PC-3 (cell line): ENCODE measurements at regions of chr3 and their contacts with region 1.

Region 1: GRCh38 chr3:49802719-49803464 is at the start of gene INKA1:
- DNase-seq: peak; percentile 89
- ATAC-seq: peak; percentile 79
- H3K4me3 ChIP-seq: peak within 1 kb of the TSS; percentile 76
- H3K27ac ChIP-seq: no peak within 1 kb of the TSS
- H3K4me1 ChIP-seq: peaks cover 23% of the 10 kb centered on the region
- H3K27me3 ChIP-seq: no peaks in the 10 kb centered on the region
- CTCF ChIP-seq: peak; percentile 87
- total RNA-seq, gene INKA1: 1.3 and 5.8 TPM in 2 replicates

Region 2: GRCh38 chr3:49703443-49703927 is 99.4 kb before region 1 on chr3:
- CTCF ChIA-PET with region 1: no interaction called
- POLR2A ChIA-PET with region 1: interaction called, 5 read pairs
- intact Hi-C with region 1: loop called (anchors 1 kb)
- DNase-seq: peak; percentile 81
- ATAC-seq: peak; percentile 88
- H3K4me3 ChIP-seq: no peak overlapping the region
- H3K27ac ChIP-seq: no peak overlapping the region
- H3K4me1 ChIP-seq: no peaks in the 10 kb centered on the region
- H3K27me3 ChIP-seq: no peaks in the 10 kb centered on the region
- CTCF ChIP-seq: peak; percentile 85

Region 3: GRCh38 chr3:49775538-49775937 is 27.4 kb before region 1 on chr3:
- CTCF ChIA-PET with region 1: interaction called, 3 read pairs
- POLR2A ChIA-PET with region 1: interaction called, 17 read pairs
- intact Hi-C with region 1: no loop called
- DNase-seq: no peak
- ATAC-seq: no peak
- H3K4me3 ChIP-seq: no peak overlapping the region
- H3K27ac ChIP-seq: no peak overlapping the region
- H3K4me1 ChIP-seq: peaks cover 23% of the 10 kb centered on the region
- H3K27me3 ChIP-seq: no peaks in the 10 kb centered on the region
- CTCF ChIP-seq: no peak

Region 4: GRCh38 chr3:49899815-49900214 is 96.9 kb after region 1 on chr3:
- CTCF ChIA-PET with region 1: interaction called, 6 read pairs
- POLR2A ChIA-PET with region 1: interaction called, 10 read pairs
- intact Hi-C with region 1: no loop called
- DNase-seq: peak; percentile 23
- ATAC-seq: no peak
- H3K4me3 ChIP-seq: peak overlapping the region; percentile 63
- H3K27ac ChIP-seq: peak overlapping the region; percentile 99
- H3K4me1 ChIP-seq: peaks cover 59% of the 10 kb centered on the region
- H3K27me3 ChIP-seq: no peaks in the 10 kb centered on the region
- CTCF ChIP-seq: peak; percentile 49

Region 5: DNA sequence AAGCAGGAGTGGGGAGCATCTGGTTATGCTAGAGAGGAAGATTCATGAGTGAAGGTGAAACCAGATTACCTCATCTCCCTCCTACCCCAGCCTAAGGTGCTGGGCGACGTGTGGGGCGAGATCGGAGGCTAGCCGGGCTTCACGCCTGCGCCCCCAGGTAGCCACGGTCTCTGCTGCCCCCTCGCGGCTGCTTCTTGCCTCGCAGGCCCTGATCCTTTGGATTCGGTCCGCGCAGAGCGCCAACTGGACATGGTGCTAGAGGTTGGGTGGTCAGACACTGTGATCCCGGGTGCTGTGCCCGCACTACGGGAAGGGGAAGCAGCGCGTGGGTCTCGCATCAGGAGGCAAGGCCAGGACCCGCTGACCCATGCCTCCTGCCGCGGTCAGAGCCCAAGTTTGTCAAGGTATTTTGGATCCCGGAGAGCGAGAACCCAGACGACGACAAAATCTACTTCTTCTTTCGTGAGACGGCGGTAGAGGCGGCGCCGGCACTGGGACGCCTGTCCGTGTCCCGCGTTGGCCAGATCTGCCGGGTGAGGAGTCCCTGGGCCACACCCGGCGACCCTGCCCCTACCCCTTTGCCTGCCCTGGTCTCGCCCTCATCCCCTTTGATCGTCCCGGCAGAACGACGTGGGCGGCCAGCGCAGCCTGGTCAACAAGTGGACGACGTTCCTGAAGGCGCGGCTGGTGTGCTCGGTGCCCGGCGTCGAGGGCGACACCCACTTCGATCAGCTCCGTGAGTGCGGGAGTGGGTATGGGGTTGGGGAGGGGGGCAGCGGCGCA is 470.2 kb after region 1 on chr3:
- CTCF ChIA-PET with region 1: no interaction called
- POLR2A ChIA-PET with region 1: no interaction called
- intact Hi-C with region 1: no loop called
- DNase-seq: peak; percentile 92
- ATAC-seq: peak; percentile 42
- H3K4me3 ChIP-seq: peak overlapping the region; percentile 59
- H3K27ac ChIP-seq: no peak overlapping the region
- H3K4me1 ChIP-seq: peaks cover 38% of the 10 kb centered on the region
- H3K27me3 ChIP-seq: no peaks in the 10 kb centered on the region
- CTCF ChIP-seq: peak; percentile 96